HepG2 (cell line): ENCODE measurements at regions of chr11 and their contacts with region 1.

Region 1: GRCh38 chr11:75520688-75521087 is 5.1 kb downstream of the GDPD5 start:
- DNase-seq: no peak
- ATAC-seq: no peak
- H3K4me3 ChIP-seq: no peak overlapping the region
- H3K27ac ChIP-seq: peak overlapping the region; percentile 26
- H3K4me1 ChIP-seq: peaks cover 88% of the 10 kb centered on the region
- H3K27me3 ChIP-seq: no peaks in the 10 kb centered on the region
- CTCF ChIP-seq: no peak
- EP300 ChIP-seq: no peak
- POLR2A ChIP-seq: no peak
- RAD21 ChIP-seq: no peak

Region 2: GRCh38 chr11:75482931-75483469 is 37.7 kb before region 1 on chr11:
- CTCF ChIA-PET with region 1: no interaction called
- POLR2A ChIA-PET with region 1: interaction called, 6 read pairs
- in situ Hi-C with region 1: no loop called
- intact Hi-C with region 1: loop called (anchors 1 kb)
- DNase-seq: peak; percentile 80
- ATAC-seq: peak; percentile 94
- H3K4me3 ChIP-seq: no peak overlapping the region
- H3K27ac ChIP-seq: peak overlapping the region; percentile 45
- H3K4me1 ChIP-seq: peaks cover 37% of the 10 kb centered on the region
- H3K27me3 ChIP-seq: no peaks in the 10 kb centered on the region
- CTCF ChIP-seq: no peak
- EP300 ChIP-seq: peak in 1 of 2 experiments; percentile 9; a peak in 1 of 4 replicates
- POLR2A ChIP-seq: no peak
- RAD21 ChIP-seq: no peak

Region 3: GRCh38 chr11:75510004-75510722 is 10.5 kb before region 1 on chr11:
- CTCF ChIA-PET with region 1: no interaction called
- POLR2A ChIA-PET with region 1: interaction called, 17 read pairs
- in situ Hi-C with region 1: no loop called
- intact Hi-C with region 1: no loop called
- DNase-seq: no peak
- ATAC-seq: peak; percentile 36
- H3K4me3 ChIP-seq: no peak overlapping the region
- H3K27ac ChIP-seq: peak overlapping the region; percentile 48
- H3K4me1 ChIP-seq: peaks cover 100% of the 10 kb centered on the region
- H3K27me3 ChIP-seq: no peaks in the 10 kb centered on the region
- CTCF ChIP-seq: no peak
- EP300 ChIP-seq: no peak
- POLR2A ChIP-seq: no peak
- RAD21 ChIP-seq: no peak